ENCODE measurements at regions of chr6 and their contacts with region 1.

Region 1: GRCh38 chr6:91337967-91338366 is 751.1 kb upstream of the MAP3K7 start:
- DNase-seq: no peak
- ATAC-seq: no peak
- H3K4me3 ChIP-seq: no peak overlapping the region
- H3K27ac ChIP-seq: no peak overlapping the region
- H3K4me1 ChIP-seq: no peaks in the 10 kb centered on the region
- H3K27me3 ChIP-seq: no peaks in the 10 kb centered on the region
- CTCF ChIP-seq: 0 out of 2 replicates have a peak, but pooled peaks have one; percentile 34

Region 2: DNA sequence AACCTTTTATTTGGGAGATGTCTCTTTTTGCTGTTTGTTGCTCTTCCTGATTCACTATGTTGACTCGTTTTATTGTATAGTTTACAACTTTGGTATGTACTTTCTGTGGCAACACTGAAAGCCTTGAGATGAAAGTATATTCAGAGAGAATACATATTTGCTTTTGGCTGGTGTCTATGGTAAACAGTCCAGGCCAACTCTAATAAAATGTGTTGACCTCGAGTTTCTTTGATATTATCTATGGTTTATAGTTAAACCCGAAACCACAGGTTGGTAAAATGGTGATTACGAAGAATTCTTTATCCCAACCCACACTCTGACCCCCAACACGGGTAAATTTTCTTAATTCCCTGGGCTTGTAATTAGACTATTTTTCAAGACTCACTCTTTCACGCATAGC is 168.6 kb after region 1 on chr6:
- CTCF ChIA-PET with region 1: no interaction called
- POLR2A ChIA-PET with region 1: no interaction called
- intact Hi-C with region 1: loop called (anchors 10 kb)
- DNase-seq: peak; percentile 73
- ATAC-seq: peak; percentile 84
- H3K4me3 ChIP-seq: no peak overlapping the region
- H3K27ac ChIP-seq: 0 out of 2 replicates have a peak overlapping the region, but pooled peaks have one; percentile 29
- H3K4me1 ChIP-seq: peaks cover 17% of the 10 kb centered on the region
- H3K27me3 ChIP-seq: no peaks in the 10 kb centered on the region
- CTCF ChIP-seq: no peak

Region 3: DNA sequence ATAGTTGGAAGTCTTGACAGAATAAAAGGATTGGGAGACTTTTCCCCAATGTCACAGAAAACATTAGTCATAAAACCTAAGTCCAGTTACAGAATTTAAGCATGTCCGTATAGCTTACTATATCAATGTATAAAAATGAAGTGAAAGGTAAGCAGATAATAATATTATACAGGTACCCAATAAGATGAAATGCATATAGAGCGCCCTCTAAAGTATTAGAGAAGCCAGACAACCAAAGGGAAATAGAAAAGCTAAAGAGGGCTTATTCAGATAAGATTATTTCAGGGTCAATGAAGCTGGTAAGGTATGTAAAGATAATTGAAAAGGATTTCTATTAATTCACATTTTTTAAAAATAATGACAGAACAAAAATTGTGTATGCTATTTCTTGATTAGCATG is 196.6 kb after region 1 on chr6:
- CTCF ChIA-PET with region 1: no interaction called
- POLR2A ChIA-PET with region 1: no interaction called
- intact Hi-C with region 1: loop called (anchors 10 kb)
- DNase-seq: peak; percentile 18
- ATAC-seq: no peak
- H3K4me3 ChIP-seq: no peak overlapping the region
- H3K27ac ChIP-seq: no peak overlapping the region
- H3K4me1 ChIP-seq: no peaks in the 10 kb centered on the region
- H3K27me3 ChIP-seq: no peaks in the 10 kb centered on the region
- CTCF ChIP-seq: peak; percentile 53

Region 4: DNA sequence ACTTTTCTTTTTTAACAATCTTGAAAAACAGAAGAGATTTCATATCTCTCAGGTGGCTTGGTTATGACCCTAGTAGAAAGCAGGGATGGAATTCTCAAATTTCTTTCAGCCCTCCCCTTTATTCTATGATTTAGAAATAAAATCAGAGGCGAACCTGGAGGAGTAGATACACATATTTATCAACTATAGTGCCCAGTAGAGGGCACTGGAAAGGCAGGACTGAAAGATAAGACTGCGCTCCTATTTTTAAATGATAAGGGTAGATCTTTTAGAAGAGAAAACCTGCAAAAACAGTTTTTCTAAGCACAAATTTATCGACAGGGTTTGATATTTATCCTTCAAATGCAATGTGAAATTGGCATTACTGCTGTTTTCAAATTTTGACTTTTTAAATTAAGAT is 784.8 kb after region 1 on chr6:
- CTCF ChIA-PET with region 1: no interaction called
- POLR2A ChIA-PET with region 1: no interaction called
- intact Hi-C with region 1: loop called (anchors 10 kb)
- DNase-seq: peak; percentile 31
- ATAC-seq: no peak
- H3K4me3 ChIP-seq: no peak overlapping the region
- H3K27ac ChIP-seq: no peak overlapping the region
- H3K4me1 ChIP-seq: peaks cover 16% of the 10 kb centered on the region
- H3K27me3 ChIP-seq: no peaks in the 10 kb centered on the region
- CTCF ChIP-seq: peak; percentile 62

Measured in PC-3 (cell line).